Activated naive CD4-positive, alpha-beta T cell treated with anti-CD3 and anti-CD28 coated beads for 36 hours (primary cell): ENCODE measurements at regions of chr10 and their contacts with region 1.

Region 1: DNA sequence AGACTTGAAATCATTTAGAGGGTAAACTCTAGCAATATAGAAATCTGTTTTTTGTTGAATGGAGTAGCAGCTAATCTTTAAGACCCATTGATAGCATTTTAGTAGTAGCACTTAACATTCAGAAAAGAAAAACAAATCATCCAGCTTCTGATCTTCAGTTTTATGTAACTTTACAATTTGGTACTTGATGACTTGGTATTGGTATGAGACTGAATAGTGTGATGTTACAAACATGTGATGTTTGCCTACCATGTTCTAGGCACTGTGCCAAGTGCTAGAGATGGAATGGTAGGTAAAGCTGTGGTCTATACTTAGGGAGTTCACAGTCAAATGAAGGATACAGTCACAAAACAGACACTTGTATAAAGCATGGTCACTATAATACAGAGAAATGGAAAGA is 21.3 kb downstream of the ZEB1 start:
- DNase-seq: peak; percentile 49
- H3K4me3 Mint-ChIP-seq: no peak overlapping the region
- H3K27ac Mint-ChIP-seq: no peak overlapping the region
- H3K4me1 Mint-ChIP-seq: peaks cover 31% of the 10 kb centered on the region
- H3K27me3 Mint-ChIP-seq: no peaks in the 10 kb centered on the region

Region 2: DNA sequence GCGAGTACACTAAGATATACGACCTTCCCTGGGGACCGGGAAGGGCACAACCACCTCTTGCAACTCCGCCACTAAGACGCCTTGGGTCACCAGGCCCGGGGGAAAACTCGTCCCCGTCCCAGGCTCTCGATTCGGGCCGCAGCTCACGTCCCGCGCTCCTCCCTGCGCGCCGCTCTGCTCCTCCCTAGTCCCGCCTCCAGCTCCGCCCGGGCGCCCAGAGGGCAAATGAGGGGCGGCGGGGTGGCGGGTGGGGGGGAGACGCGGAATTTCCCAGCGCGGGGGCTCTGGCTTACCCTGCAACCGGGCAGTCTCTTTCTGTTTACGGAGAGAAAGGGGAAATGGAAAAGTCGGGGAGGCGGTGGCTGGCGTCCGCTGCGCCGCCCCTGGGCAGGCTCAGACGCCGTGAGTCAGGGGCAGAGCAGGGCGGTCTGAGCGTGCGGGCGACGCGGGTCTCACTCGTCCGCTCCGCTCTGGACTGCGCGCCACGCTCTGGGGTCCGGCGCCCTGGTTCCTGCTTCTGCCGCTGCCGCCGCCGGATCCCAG is 906.5 kb before region 1 on chr10 and contains the start of gene MAP3K8:
- CTCF ChIA-PET with region 1: no interaction called
- intact Hi-C with region 1: loop called (anchors 10 kb)
- DNase-seq: peak; percentile 87
- H3K4me3 Mint-ChIP-seq: peak within 1 kb of the TSS; percentile 84
- H3K27ac Mint-ChIP-seq: peak within 1 kb of the TSS; percentile 67
- H3K4me1 Mint-ChIP-seq: peaks cover 41% of the 10 kb centered on the region
- H3K27me3 Mint-ChIP-seq: no peaks in the 10 kb centered on the region
- total RNA-seq, gene MAP3K8: 13.6 to 14.5 TPM

Region 3: DNA sequence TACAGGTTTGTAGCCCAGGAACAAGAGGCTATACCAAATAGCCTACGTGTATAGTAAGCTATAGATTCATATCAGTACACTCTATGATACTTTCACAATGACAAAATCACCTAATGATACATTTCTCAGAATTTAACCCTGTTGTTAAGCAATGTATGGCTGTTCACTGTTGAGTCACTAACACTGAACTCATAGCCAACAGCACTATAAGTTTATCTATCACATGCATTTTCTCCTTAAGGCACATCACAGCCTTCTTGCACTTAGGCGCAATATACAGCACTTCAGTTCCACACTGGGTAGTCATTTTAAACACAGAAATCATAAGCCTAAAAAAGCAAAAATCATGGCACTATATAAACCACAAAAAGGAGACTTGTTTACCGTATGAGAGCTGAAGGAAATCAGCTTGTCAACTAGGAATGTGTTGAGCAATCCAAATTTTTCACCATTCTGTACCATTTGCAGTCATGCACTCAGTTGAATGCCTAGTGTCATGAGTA is 354.2 kb before region 1 on chr10:
- CTCF ChIA-PET with region 1: no interaction called
- intact Hi-C with region 1: loop called (anchors 1 kb)
- DNase-seq: no peak
- H3K4me3 Mint-ChIP-seq: no peak overlapping the region
- H3K27ac Mint-ChIP-seq: peak overlapping the region; percentile 55
- H3K4me1 Mint-ChIP-seq: peaks cover 12% of the 10 kb centered on the region
- H3K27me3 Mint-ChIP-seq: no peaks in the 10 kb centered on the region

Region 4: DNA sequence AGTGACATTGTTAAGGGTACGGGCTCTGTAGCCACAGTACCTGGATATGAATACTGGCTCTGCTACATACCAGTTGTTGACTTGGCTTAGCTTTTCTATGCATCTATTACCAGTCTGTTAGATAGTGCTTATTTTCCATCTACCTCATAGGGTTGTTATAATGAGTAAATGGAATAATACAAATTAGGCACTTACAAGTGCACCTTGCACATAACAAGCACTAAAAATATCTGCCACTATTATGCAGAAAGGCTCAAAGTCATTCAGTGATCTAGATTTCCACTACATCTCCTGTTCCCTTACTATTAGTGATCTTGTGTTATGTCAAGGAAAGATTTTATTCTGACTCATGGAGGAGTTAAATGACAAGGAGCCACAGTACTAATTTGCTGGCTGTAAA is 49.2 kb before region 1 on chr10:
- CTCF ChIA-PET with region 1: no interaction called
- intact Hi-C with region 1: loop called (anchors 1 kb)
- DNase-seq: no peak
- H3K4me3 Mint-ChIP-seq: no peak overlapping the region
- H3K27ac Mint-ChIP-seq: no peak overlapping the region
- H3K4me1 Mint-ChIP-seq: peaks cover 6% of the 10 kb centered on the region
- H3K27me3 Mint-ChIP-seq: no peaks in the 10 kb centered on the region

Region 5: DNA sequence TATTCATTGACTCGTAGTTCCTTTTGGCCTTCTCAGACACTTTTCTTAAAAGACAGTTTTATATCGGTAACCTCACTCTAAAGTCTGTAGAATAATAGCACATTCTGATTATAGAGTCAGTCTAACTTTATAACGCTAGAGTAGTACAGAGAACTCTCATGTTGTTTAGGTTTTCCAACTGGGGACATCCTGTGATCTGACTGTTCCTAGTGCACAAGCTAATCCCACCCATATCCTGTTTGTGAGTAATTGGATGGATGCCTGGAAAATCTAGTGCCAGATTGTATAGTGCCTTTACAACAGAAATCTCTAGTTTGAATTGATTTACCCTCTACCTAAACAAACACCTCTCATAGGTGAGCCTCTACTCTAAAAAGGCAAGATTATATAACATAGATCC is 86.1 kb after region 1 on chr10:
- CTCF ChIA-PET with region 1: no interaction called
- intact Hi-C with region 1: loop called (anchors 1 kb)
- DNase-seq: no peak
- H3K4me3 Mint-ChIP-seq: no peak overlapping the region
- H3K27ac Mint-ChIP-seq: no peak overlapping the region
- H3K4me1 Mint-ChIP-seq: peaks cover 54% of the 10 kb centered on the region
- H3K27me3 Mint-ChIP-seq: no peaks in the 10 kb centered on the region

Region 6: GRCh38 chr10:31508882-31509281 is 168.5 kb after region 1 on chr10:
- CTCF ChIA-PET with region 1: no interaction called
- intact Hi-C with region 1: no loop called
- DNase-seq: no peak
- H3K4me3 Mint-ChIP-seq: no peak overlapping the region
- H3K27ac Mint-ChIP-seq: peak overlapping the region; percentile 48
- H3K4me1 Mint-ChIP-seq: peaks cover 8% of the 10 kb centered on the region
- H3K27me3 Mint-ChIP-seq: no peaks in the 10 kb centered on the region

Region 7: GRCh38 chr10:31707093-31708039 is 367.0 kb after region 1 on chr10:
- CTCF ChIA-PET with region 1: no interaction called
- intact Hi-C with region 1: loop called (anchors 5 kb)
- DNase-seq: peak; percentile 85
- H3K4me3 Mint-ChIP-seq: peak overlapping the region; percentile 5
- H3K27ac Mint-ChIP-seq: peak overlapping the region; percentile 83
- H3K4me1 Mint-ChIP-seq: peaks cover 22% of the 10 kb centered on the region
- H3K27me3 Mint-ChIP-seq: no peaks in the 10 kb centered on the region

Region 8: GRCh38 chr10:32378363-32379317 is 1038.3 kb after region 1 on chr10:
- CTCF ChIA-PET with region 1: no interaction called
- intact Hi-C with region 1: loop called (anchors 10 kb)
- DNase-seq: peak; percentile 97
- H3K4me3 Mint-ChIP-seq: no peak overlapping the region
- H3K27ac Mint-ChIP-seq: no peak overlapping the region
- H3K4me1 Mint-ChIP-seq: peaks cover 13% of the 10 kb centered on the region
- H3K27me3 Mint-ChIP-seq: no peaks in the 10 kb centered on the region